K562 (cell line): ENCODE measurements at regions of chrX and their contacts with region 1.

Region 1: GRCh38 chrX:114959729-114960128 is 57.7 kb downstream of the IL13RA2 start:
- DNase-seq: peak in 1 of 4 experiments; percentile 5
- ATAC-seq: no peak
- H3K4me3 ChIP-seq: no peak overlapping the region
- H3K27ac ChIP-seq: no peak overlapping the region
- H3K4me1 ChIP-seq: no peaks in the 10 kb centered on the region
- H3K27me3 ChIP-seq: no peaks in the 10 kb centered on the region
- CTCF ChIP-seq: peak in 2 of 3 experiments; percentile 14 to 49; a peak in 2 of 6 replicates
- EP300 ChIP-seq: no peak
- POLR2A ChIP-seq: no peak
- RAD21 ChIP-seq: peak in 1 of 2 experiments; percentile 55; a peak in 2 of 4 replicates

Region 2: DNA sequence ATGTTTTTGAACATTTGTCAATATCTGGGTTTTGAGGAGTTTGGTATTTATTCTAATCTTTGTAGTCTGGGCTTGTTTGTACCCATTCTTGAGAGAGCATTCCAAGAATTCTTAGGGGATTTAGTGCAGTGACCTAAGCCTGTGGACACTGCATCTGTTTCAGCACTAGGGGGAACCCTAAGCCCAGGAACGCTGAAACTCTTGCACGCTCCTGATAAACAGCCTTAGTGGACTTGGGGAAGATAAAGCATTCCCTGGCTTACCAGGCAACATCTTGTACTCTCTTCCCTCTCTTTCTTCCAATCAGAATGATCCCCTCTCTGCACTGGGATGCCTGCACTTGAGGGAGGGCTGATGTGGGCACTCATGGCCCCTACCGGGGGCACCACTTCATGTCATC is 1030.7 kb before region 1 on chrX:
- CTCF ChIA-PET with region 1: no interaction called
- POLR2A ChIA-PET with region 1: no interaction called
- in situ Hi-C with region 1: no loop called
- intact Hi-C with region 1: loop called (anchors 5 kb)
- DNase-seq: peak; percentile 7 to 57 (median 21)
- ATAC-seq: peak; percentile 86
- H3K4me3 ChIP-seq: no peak overlapping the region
- H3K27ac ChIP-seq: no peak overlapping the region
- H3K4me1 ChIP-seq: no peaks in the 10 kb centered on the region
- H3K27me3 ChIP-seq: no peaks in the 10 kb centered on the region
- CTCF ChIP-seq: peak; percentile 55 to 60 (median 57)
- EP300 ChIP-seq: no peak
- POLR2A ChIP-seq: no peak
- RAD21 ChIP-seq: peak; percentile 22 to 76; a peak in 3 of 4 replicates

Region 3: GRCh38 chrX:114619874-114620273 is 339.9 kb before region 1 on chrX:
- CTCF ChIA-PET with region 1: no interaction called
- POLR2A ChIA-PET with region 1: no interaction called
- in situ Hi-C with region 1: no loop called
- intact Hi-C with region 1: loop called (anchors 5 kb)
- DNase-seq: peak; percentile 10 to 25 (median 17)
- ATAC-seq: 0 out of 3 replicates have a peak, but pooled peaks have one; percentile 49
- H3K4me3 ChIP-seq: no peak overlapping the region
- H3K27ac ChIP-seq: no peak overlapping the region
- H3K4me1 ChIP-seq: no peaks in the 10 kb centered on the region
- H3K27me3 ChIP-seq: no peaks in the 10 kb centered on the region
- CTCF ChIP-seq: peak in 2 of 3 experiments; percentile 39 to 43; a peak in 2 of 6 replicates
- EP300 ChIP-seq: no peak
- POLR2A ChIP-seq: no peak
- RAD21 ChIP-seq: no peak